ENCODE measurements at regions of chr9 and their contacts with region 1.

Region 1: DNA sequence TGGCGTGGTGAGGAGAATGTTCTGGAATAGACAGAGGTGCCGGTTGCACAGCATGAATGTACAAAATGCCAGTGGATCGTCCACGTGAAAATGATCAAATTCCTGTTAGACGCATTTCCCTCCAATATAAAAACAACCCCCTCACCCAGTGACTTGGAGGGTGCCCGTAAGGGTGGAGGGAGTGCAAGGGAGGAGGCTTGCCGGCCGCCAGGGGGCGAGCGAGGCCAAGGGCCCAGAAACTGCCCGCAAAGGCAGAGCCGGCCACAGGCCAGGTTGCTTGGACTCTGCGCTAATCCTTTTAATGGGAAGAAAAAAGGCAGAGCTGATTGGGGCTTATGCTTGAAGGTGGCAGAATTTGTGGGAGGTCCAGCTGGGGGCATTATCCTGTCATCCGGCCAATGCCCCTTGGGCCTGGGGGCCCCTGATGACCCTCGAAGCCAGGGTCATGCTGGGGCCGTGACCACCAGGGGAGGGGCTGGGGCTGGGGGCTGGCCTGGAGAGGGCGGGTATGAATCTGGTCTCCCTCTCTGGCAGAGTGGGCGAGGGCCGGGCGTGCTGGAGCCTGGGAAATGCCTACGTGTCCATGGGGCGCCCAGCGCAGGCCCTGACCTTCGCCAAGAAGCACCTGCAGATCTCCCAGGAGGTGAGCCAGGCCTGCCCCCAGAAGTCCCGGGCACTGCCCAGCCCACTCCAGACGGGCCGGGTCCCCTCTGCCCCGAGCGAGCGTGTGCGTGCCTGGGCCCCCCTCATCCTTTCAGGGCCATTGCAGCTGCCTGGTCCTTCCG is 12.0 kb downstream of the GPSM1 start:
- DNase-seq: peak; percentile 56
- ATAC-seq: peak; percentile 75
- H3K4me3 ChIP-seq: no peak overlapping the region
- H3K27ac ChIP-seq: no peak overlapping the region
- H3K4me1 ChIP-seq: no peaks in the 10 kb centered on the region
- H3K27me3 ChIP-seq: no peaks in the 10 kb centered on the region
- CTCF ChIP-seq: peak; percentile 81

Region 2: GRCh38 chr9:136400038-136400834 is 60.9 kb after region 1 on chr9 and contains the start of gene SNAPC4:
- CTCF ChIA-PET with region 1: no interaction called
- POLR2A ChIA-PET with region 1: no interaction called
- intact Hi-C with region 1: loop called (anchors 2 kb)
- DNase-seq: peak; percentile 85
- ATAC-seq: peak; percentile 90
- H3K4me3 ChIP-seq: peak within 1 kb of the TSS; percentile 91
- H3K27ac ChIP-seq: no peak within 1 kb of the TSS; the same call in 1 of the 2 replicates
- H3K4me1 ChIP-seq: peaks cover 12% of the 10 kb centered on the region
- H3K27me3 ChIP-seq: no peaks in the 10 kb centered on the region
- CTCF ChIP-seq: peak; percentile 73
- total RNA-seq, gene SNAPC4: 7.5 and 7.8 TPM in 2 replicates